ENCODE measurements at regions of chr7 and their contacts with region 1.

Region 1: GRCh38 chr7:5629941-5630340 is 151.5 kb downstream of the RNF216 start:
- DNase-seq: peak; percentile 75
- H3K4me3 ChIP-seq: no peak overlapping the region
- H3K27ac ChIP-seq: peak overlapping the region; percentile 18
- H3K27me3 ChIP-seq: no peaks in the 10 kb centered on the region
- CTCF ChIP-seq: peak; percentile 31

Region 2: GRCh38 chr7:5704534-5704922 is 74.6 kb after region 1 on chr7:
- in situ Hi-C with region 1: loop called (anchors 5 kb)
- DNase-seq: peak; percentile 76
- H3K4me3 ChIP-seq: no peak overlapping the region
- H3K27ac ChIP-seq: no peak overlapping the region
- H3K27me3 ChIP-seq: no peaks in the 10 kb centered on the region
- CTCF ChIP-seq: peak; percentile 93

Measured in brain microvascular endothelial cell (primary cell).